ENCODE measurements at regions of chr12 and their contacts with region 1.

Region 1: DNA sequence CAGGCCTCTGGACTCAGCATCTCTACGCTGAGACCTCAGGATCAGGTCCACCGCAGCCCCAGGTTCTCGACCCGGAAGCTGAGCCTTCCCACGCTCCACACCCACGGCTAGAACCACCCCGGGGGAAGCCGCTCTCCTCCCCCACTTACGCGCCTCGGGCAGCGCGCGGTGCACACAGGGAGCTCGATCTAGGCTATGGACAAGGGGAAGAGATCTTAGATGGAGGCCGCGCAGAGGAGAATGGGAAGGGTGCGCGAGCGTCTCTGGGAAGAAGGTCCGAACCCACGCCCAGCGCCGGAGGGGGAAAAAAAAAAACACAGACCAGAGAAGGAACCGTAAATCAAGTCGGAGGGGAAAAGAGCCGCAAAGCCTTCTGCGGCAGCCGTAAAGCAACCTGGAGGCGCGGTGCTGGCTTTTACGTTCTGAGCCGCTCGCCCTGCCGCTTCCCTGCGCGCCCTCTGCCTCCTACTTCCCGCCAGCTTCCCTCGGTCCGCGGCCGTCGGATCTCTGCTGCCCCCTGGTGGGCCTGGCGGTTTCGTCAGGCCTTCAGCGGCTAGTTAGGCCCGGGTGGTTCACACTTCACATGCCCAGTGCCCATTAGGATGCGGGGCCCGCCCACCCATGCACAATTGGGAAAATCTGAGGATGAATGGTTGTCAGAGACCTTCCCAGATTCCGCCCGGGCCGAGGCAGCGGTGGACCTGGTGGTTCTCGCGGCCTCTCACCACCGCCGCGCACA is at the start of gene RAD52:
- DNase-seq: peak; percentile 96
- H3K4me3 Mint-ChIP-seq: peak within 1 kb of the TSS; percentile 96
- H3K27ac Mint-ChIP-seq: peak within 1 kb of the TSS; percentile 96
- H3K4me1 Mint-ChIP-seq: peaks cover 31% of the 10 kb centered on the region
- H3K27me3 Mint-ChIP-seq: no peaks in the 10 kb centered on the region
- total RNA-seq, gene RAD52: 14.5 and 15.3 TPM in 2 replicates

Region 2: DNA sequence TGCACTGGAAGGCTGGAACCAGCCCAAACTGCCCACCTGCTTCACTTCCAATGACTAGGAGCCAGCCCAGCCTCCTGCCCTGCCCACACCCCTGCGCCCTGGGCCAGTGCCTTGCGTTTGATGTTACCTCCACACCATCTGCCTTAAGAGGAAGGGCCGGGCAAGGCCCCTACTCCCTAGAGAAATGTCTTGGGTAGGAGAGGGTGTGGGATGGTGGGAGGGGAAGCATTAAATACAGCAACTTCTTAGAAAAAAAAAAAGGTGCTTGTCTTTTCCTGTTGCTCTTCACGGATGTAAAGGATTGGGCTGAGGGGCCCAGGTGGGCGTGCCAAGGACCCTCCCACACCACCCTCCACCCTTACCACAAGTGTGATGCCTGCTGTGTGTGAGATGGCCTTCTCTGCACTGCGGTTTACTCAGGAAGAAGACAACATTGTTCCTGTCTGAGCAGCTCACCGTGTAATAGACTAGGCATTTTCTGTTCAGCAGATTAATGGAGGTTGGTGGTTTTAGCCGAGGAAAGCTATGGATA is 386.3 kb before region 1 on chr12:
- intact Hi-C with region 1: loop called (anchors 5 kb)
- DNase-seq: peak; percentile 68
- H3K4me3 Mint-ChIP-seq: peak overlapping the region; percentile 40
- H3K27ac Mint-ChIP-seq: peak overlapping the region; percentile 72
- H3K4me1 Mint-ChIP-seq: peaks cover 36% of the 10 kb centered on the region
- H3K27me3 Mint-ChIP-seq: no peaks in the 10 kb centered on the region

Region 3: GRCh38 chr12:575948-576612 is 373.5 kb before region 1 on chr12:
- intact Hi-C with region 1: loop called (anchors 2 kb)
- DNase-seq: peak; percentile 80
- H3K4me3 Mint-ChIP-seq: no peak overlapping the region
- H3K27ac Mint-ChIP-seq: peak overlapping the region; percentile 74
- H3K4me1 Mint-ChIP-seq: peaks cover 25% of the 10 kb centered on the region
- H3K27me3 Mint-ChIP-seq: peaks cover 3% of the 10 kb centered on the region

Region 4: DNA sequence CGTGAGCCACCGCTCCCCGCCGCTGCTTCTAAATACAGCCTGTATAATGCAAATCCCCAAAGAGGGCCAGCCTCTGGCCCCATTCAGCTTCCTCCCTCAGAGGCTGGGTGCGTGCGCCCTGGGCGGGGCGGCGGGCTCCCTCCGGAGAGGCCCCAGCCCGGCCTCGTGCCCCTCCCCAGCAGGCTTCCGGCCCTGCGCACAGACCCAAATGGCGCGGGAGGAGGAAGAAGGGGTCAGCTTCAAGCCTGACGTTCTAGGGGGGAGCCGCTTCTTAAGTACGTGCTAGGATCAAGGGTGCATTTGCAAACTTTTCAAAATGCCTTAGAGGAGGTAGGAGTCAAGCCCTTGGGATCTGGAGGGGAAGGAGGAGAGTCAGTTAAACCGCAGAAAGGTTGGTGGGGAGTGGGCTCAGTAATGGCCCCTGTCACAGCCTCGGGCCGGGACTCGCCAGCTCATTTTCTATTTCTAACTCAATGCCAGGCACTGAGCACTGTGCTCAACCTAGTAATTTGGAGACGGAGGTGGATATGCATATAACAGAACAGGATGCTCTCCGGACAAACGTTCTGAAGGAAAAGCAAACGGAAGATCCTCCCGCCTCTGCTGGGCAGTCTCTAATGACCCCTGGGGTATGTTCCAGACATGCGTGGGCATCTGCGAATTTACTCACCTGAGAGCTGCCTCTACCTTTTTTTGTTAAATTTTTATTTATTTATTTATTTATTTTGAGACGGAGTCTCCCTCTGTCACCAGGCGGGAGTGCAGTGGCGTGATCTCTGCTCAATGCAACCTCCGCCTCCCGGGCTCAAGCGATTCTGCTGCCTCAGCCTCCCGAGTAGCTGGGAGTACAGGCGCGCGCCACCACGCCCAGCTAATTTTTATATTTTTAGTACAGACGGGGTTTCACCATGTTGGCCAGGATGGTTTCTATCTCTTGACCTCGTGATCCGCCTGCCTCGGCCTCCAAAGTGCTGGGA is 318.7 kb before region 1 on chr12:
- intact Hi-C with region 1: loop called (anchors 5 kb)
- DNase-seq: peak; percentile 82
- H3K4me3 Mint-ChIP-seq: peak overlapping the region; percentile 100
- H3K27ac Mint-ChIP-seq: peak overlapping the region; percentile 99
- H3K4me1 Mint-ChIP-seq: peaks cover 27% of the 10 kb centered on the region
- H3K27me3 Mint-ChIP-seq: no peaks in the 10 kb centered on the region

Region 5: GRCh38 chr12:810671-811415 is 138.8 kb before region 1 on chr12:
- intact Hi-C with region 1: loop called (anchors 1 kb)
- DNase-seq: no peak
- H3K4me3 Mint-ChIP-seq: no peak overlapping the region
- H3K27ac Mint-ChIP-seq: peak overlapping the region; percentile 18
- H3K4me1 Mint-ChIP-seq: peaks cover 55% of the 10 kb centered on the region
- H3K27me3 Mint-ChIP-seq: no peaks in the 10 kb centered on the region

Region 6: GRCh38 chr12:990661-991349 is 41.2 kb after region 1 on chr12 and contains the start of gene ERC1:
- intact Hi-C with region 1: loop called (anchors 2 kb)
- DNase-seq: peak; percentile 83
- H3K4me3 Mint-ChIP-seq: peak within 1 kb of the TSS; percentile 95
- H3K27ac Mint-ChIP-seq: peak within 1 kb of the TSS; percentile 93
- H3K4me1 Mint-ChIP-seq: peaks cover 35% of the 10 kb centered on the region
- H3K27me3 Mint-ChIP-seq: no peaks in the 10 kb centered on the region
- total RNA-seq, gene ERC1: 37.5 and 42.6 TPM in 2 replicates

Region 7: DNA sequence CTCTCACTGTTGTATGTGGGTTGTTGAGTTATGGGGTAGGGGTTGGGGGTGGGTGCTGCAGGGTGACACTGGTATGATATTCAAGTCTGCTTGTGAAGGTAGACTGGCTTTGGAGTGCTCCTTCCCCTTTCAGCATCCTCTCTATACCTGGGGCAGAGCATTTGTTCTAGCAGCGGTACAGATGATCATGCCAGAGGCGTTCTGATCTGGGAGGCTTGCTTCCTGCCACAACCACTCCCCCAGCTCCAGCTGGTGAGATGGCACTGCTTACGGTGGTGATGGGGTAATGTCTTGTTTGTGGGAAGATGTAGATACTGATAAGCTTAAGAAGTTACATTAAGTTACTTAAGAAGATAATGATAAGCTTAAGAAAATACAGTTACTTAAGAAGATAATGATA is 173.2 kb after region 1 on chr12:
- intact Hi-C with region 1: no loop called
- DNase-seq: no peak
- H3K4me3 Mint-ChIP-seq: no peak overlapping the region
- H3K27ac Mint-ChIP-seq: no peak overlapping the region
- H3K4me1 Mint-ChIP-seq: peaks cover 19% of the 10 kb centered on the region
- H3K27me3 Mint-ChIP-seq: peaks cover 1% of the 10 kb centered on the region

Region 8: DNA sequence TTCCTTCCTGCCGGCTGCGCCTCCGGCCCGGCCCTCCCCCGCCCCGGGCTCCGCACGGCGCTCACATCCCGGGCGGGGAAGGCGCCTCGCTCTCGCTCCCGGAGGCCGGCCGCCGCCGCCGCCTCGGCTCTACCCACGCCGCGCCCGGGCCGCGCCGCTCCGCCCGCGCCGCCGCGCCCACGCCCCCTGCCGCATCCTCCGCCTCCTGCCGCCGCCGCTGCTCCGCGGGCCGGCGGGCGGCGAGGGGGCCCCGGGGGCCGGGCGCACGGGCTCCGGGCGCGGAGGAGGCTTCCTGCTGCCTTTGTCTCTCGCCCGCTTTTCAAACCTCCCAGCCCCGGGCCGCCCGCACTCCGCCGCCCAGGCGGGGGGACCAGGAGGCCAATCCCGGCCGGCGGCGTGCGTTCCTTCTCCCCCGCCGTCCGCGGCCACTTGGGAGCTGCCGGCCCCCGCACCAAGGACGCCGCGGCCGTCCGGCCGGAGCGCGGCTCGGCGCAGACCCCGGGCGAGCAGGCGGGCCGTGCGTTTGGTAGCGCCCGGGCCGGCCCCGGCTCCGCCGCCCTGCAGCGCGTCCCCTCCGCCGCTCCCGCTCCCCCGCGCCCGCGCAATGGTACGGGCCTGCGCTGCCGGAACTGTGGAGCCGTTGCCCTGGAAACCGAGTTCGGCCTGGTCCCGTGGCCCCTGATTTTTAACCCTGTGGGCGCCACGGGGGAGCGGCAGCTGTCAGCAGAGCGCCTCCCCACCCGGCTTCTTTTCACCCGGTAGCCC is 644.8 kb after region 1 on chr12 and contains the start of gene FBXL14:
- intact Hi-C with region 1: loop called (anchors 5 kb)
- DNase-seq: peak; percentile 86
- H3K4me3 Mint-ChIP-seq: peak within 1 kb of the TSS; percentile 92
- H3K27ac Mint-ChIP-seq: peak within 1 kb of the TSS; percentile 89
- H3K4me1 Mint-ChIP-seq: peaks cover 47% of the 10 kb centered on the region
- H3K27me3 Mint-ChIP-seq: no peaks in the 10 kb centered on the region
- total RNA-seq, gene FBXL14: 18.9 and 20.6 TPM in 2 replicates

Measured in activated T-helper 2 cell treated with anti-CD3 and anti-CD28 coated beads, Interferon-gamma antibody, Interleukin-2, Interleukin-4, amounts not matched to agents 10 μg/mL and 5 μg/mL and 100 μg/mL, durations not matched to agents 14 hours and 24 hours and 36 hours (primary cell).